WTC11 (cell line): ENCODE measurements at regions of chr1 and their contacts with region 1.

Region 1: DNA sequence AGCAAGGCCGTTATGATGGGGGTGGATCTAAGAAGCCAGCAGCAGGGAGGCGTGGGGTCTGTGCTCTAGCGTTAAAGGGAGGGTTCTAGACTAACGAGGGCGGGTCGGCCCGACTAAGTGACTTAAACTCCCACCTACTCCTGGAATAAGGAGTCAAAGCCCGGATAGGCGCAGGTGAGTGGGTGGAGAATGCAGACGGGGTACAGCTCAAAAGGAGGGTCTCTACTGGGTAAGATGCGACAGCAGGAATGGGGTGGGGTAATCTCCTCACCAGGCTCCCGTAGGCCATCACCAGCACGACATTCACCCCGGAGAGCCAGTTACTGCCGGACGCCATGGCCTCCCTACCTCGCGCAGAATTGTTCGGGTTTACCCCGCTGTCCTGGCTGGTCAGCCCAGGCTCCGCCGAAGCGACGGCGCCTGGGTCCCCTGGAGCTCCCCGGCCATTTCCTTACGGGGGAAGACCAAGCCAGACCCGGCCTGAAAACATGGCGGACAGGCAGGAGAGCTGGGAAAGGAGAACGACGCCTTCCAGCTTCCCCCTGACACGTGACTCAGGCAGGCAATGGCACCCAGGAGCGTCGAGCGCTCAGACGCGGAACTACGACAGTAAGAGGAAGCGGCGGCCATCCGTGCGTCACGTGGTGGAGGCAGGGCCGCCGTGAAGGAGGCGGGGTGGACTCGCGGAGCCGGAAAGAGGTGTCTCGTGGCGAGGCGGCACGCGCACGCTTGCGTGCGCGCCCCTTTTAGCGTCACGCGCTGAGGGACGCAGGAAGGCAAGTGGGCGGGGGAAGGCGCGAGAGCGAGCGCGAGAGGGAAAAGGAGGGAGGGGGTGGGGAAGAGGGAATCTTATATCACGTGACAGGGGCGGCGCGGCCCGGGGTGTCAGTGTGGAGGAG is at the start of gene UBAP2L:
- DNase-seq: peak; percentile 99
- ATAC-seq: peak; percentile 91
- H3K4me3 Mint-ChIP-seq: peak within 1 kb of the TSS; percentile 98
- H3K27ac Mint-ChIP-seq: peak within 1 kb of the TSS; percentile 100
- H3K4me1 Mint-ChIP-seq: peaks cover 44% of the 10 kb centered on the region
- H3K27me3 Mint-ChIP-seq: no peaks in the 10 kb centered on the region
- CTCF ChIP-seq: no peak
- total RNA-seq, gene UBAP2L: 201 to 205 TPM (median 203 TPM) in 3 replicates

Region 2: DNA sequence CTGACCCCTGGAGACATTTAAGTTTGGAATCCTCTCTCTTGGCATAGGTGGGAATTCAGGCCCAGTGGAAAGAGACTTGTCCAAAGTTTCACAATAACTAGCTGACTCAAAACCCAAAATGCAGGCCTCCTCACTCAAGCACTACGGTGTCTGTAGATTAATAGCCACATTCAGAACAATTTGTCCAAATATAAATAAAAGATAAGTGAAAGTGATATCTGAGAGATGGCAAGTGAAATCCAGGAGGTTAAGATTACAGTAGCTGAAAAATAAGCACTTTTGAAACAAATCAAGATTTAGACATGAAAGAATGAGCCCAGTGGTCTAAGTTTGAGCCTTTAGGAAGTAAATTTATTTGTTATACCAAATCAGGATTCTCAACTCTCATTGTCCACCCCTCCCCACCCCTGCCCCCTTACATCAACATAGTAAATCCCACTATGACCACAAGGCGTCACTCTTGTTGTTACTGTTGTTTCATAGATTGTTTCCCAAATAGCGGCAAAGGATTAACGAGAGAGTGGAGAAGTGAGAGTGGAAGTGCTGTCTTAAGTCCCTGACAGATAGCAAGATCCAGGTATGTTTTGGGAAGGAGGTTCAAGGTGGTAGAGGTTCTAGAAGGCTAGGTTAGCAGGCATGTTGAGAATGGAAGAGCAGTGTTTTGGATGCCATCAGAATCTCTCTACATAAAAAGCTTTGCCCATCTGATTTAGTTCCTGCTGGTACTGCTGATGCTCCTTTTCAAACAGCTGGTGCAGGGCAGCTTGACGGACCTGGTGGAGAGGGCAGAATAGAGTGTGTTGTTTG is 21.4 kb before region 1 on chr1:
- CTCF ChIA-PET with region 1: interaction called, 20 read pairs
- POLR2A ChIA-PET with region 1: interaction called, 3 read pairs
- DNase-seq: peak; percentile 23
- ATAC-seq: peak; percentile 88
- H3K4me3 Mint-ChIP-seq: no peak overlapping the region
- H3K27ac Mint-ChIP-seq: no peak overlapping the region
- H3K4me1 Mint-ChIP-seq: peaks cover 2% of the 10 kb centered on the region; the same call in 1 of the 2 replicates
- H3K27me3 Mint-ChIP-seq: peaks cover 3% of the 10 kb centered on the region; the same call in 1 of the 2 replicates
- CTCF ChIP-seq: 0 out of 2 replicates have a peak, but pooled peaks have one; percentile 26